ENCODE measurements at regions of chr9 and their contacts with region 1.

Region 1: DNA sequence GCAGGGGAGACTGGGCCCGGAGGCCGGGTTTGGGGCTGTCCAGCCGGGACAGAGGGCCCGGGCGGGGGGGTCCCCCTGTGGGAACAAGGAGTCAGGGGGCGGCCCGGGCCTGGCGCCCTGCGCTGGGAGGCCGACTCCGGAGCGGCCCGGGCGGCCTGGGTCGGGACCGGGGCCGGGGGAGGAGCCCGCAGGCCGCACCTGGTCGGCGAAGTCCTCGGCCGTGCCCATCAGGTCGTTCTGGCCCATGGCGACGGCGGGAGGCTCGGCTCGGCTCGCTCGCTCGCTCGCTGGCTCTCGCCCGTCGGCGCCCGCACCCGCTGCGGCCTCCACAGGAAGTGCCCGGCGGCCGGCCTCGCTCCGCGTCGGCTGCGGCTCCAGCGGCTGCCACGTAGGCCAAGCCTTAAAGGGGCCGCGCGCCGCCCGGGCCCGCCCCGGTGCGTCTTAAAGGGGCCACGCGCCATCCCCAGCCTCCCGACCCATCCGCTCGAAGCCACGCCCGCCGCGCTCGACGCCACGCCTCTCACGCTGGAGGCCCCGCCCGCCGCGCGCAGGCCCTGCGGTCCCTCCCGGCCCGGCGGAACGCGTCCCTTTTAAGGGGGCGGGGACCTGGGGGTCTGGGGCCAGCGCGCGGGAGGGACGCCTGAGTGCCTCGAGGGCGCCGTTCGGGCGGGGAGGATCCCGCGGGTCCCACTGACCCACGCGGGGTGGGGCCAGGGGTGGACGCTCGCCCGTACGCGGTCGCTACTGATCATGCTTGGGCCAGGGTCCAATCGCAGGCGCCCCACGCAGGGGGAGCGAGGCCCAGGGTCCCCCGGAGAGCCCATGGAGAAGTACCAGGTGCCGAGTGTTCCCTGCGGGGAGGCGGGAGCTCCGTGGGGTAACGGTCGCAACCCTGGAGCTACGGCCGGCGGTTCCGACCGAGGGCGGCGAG is at the starts of genes STKLD1 and SURF4:
- DNase-seq: peak; percentile 98
- H3K4me3 ChIP-seq: peak within 1 kb of the TSS; percentile 76 to 99 (median 99)
- H3K27ac ChIP-seq: peak within 1 kb of the TSS; percentile 85
- H3K4me1 ChIP-seq: peaks cover 10% of the 10 kb centered on the region
- H3K27me3 ChIP-seq: no peaks in the 10 kb centered on the region
- CTCF ChIP-seq: no peak
- POLR2A ChIP-seq: peak; percentile 84
- total RNA-seq, gene STKLD1: 0.77 and 0.85 TPM in 2 replicates
- total RNA-seq, gene SURF4: 216 and 230 TPM in 2 replicates

Region 2: GRCh38 chr9:133347985-133348717 is 27.8 kb before region 1 on chr9 and contains the starts of genes MED22 and RPL7A:
- CTCF ChIA-PET with region 1: interaction called, 3 read pairs
- POLR2A ChIA-PET with region 1: interaction called, 10 read pairs
- dilution Hi-C with region 1: no loop called
- intact Hi-C with region 1: loop called (anchors 1 kb)
- DNase-seq: peak; percentile 97
- H3K4me3 ChIP-seq: peak within 1 kb of the TSS; percentile 69 to 84 (median 83)
- H3K27ac ChIP-seq: peak within 1 kb of the TSS; percentile 91
- H3K4me1 ChIP-seq: peaks cover 14% of the 10 kb centered on the region
- H3K27me3 ChIP-seq: no peaks in the 10 kb centered on the region
- CTCF ChIP-seq: no peak
- POLR2A ChIP-seq: peak; percentile 98
- total RNA-seq, gene MED22: 26.7 and 27.4 TPM in 2 replicates
- total RNA-seq, gene RPL7A: 2,043 and 2,112 TPM in 2 replicates

Region 3: DNA sequence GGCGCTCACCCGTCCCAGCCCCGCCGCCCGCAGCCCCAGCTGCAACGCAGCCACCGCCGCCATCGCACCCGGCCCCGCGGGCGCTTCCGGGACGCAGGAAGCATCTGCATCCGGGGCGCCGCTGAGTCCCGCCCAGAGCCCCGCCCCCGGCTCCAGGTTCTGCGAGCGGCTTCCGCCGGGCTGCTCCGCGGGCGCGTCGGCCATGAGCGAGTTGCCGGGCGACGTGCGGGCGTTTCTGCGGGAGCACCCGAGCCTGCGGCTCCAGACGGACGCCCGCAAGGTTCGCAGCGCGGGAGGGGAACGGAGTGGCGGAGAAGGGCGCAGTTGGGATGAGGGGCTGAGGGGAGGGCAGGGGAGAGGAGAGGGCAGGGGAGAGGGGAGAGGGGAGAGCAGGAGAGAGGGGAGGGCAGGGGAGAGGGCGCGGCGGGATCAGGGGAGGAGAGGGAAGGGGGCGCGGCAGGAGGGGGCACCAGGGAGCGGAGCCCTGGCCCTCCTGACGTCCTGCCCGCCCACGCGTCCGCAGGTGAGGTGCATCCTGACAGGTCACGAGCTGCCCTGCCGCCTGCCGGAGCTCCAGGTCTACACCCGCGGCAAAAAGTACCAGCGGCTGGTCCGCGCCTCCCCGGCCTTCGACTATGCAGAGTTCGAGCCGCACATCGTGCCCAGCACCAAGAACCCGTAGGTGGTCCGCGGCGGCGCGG is 19.4 kb before region 1 on chr9 and contains the starts of genes SURF1 and SURF2:
- CTCF ChIA-PET with region 1: interaction called, 5 read pairs
- POLR2A ChIA-PET with region 1: no interaction called
- dilution Hi-C with region 1: no loop called
- intact Hi-C with region 1: loop called (anchors 1 kb)
- DNase-seq: peak; percentile 44
- H3K4me3 ChIP-seq: peak within 1 kb of the TSS; percentile 62 to 78 (median 77)
- H3K27ac ChIP-seq: peak within 1 kb of the TSS; percentile 60
- H3K4me1 ChIP-seq: peaks cover 10% of the 10 kb centered on the region
- H3K27me3 ChIP-seq: no peaks in the 10 kb centered on the region
- CTCF ChIP-seq: no peak
- POLR2A ChIP-seq: peak; percentile 65
- total RNA-seq, gene SURF1: 12.0 and 22.8 TPM in 2 replicates
- total RNA-seq, gene SURF2: 9.3 and 10.6 TPM in 2 replicates

Region 4: DNA sequence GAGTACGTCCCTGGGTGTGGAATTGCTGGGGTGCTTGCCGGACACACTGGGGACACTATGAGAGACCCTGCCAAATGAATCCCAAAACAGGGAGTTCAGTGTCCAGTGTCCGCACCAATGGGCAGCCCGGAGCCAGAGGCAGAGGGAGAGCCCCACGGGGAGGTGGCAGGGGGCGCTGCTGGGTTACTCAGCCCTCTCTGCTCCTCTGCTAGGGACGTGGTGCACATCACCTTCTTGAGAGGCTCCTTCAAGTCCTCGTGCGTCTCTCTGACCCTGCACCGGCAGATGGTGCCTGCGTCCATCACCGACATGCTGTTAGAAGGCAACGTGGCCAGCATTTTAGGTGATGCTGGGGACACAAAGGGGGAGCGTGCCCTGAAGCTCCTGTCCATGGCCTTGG is 21.0 kb after region 1 on chr9:
- CTCF ChIA-PET with region 1: interaction called, 3 read pairs
- POLR2A ChIA-PET with region 1: no interaction called
- dilution Hi-C with region 1: no loop called
- intact Hi-C with region 1: loop called (anchors 2 kb)
- DNase-seq: peak; percentile 17
- H3K4me3 ChIP-seq: no peak overlapping the region
- H3K27ac ChIP-seq: no peak overlapping the region
- H3K4me1 ChIP-seq: no peaks in the 10 kb centered on the region
- H3K27me3 ChIP-seq: peaks cover 0 to 3% of the 10 kb centered on the region in 2 experiments
- CTCF ChIP-seq: peak; percentile 27 to 50
- POLR2A ChIP-seq: no peak